Right cardiac atrium (tissue), 5 donors: ENCODE measurements at regions of chr7 and their contacts with region 1.

Region 1: DNA sequence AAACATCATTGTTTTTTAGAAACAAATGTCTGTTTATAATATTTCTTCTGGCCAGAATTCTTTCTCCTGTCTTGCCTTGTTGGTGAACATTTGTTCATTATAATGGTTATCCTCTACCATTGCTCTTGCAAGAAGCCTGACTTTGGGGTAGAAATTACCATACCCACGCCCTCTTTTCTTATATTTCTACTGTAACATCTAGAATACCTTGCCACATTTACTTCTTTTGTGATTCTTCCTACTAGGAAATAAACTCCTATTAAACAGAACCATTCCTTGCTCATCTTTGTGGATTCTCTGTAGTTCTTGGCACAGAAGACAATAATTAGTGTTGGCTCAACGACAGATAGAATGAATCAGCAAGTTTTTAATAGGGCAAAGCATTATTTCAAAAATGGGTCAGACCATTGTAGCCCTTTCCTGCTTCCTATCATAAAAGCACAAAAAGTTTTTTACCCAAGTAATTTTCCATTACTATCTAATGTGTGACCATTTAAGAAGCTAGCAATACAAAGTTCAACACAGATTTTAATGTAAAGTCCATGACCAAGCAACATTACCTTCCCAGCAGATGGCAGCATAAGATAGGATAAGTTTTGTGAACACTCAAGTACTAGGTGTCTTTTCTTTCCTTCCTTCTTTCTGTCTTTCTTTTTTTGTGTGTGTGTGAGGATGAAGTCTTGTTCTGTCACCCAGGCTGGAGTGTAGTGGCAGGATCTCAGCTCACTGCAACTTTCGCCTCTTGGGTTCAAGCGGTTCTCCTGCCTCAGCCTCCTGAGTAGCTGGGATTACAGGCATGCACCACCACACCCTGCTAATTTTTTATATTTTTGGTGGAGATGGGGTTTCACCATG is 270.4 kb downstream of the HGF start:
- DNase-seq: no peak
- ATAC-seq: peak; percentile 77 to 82
- H3K4me3 ChIP-seq: no peak overlapping the region
- H3K27ac ChIP-seq: no peak overlapping the region
- H3K4me1 ChIP-seq: peaks cover 2% of the 10 kb centered on the region
- H3K27me3 ChIP-seq: no peaks in the 10 kb centered on the region

Region 2: DNA sequence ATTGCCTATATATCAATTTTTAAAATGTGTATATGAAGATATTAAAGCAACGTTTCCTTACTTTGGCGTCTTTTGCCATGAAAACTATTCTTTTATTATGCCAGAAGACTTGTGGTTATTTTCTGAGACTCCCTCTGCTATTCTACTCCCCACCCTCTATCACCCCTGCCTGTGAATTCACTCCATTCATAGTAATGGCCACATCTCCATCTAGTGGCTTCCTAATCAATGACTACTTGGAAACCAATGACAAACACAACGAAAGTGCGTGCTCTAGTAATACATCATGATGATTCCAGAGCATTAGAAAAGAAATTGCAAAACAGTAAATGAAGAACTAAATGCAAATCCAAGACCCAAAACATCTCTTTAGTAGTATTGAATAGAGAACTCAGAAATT is 457.0 kb after region 1 on chr7:
- intact Hi-C with region 1: loop called in 3 of 4 experiments (anchors 10 kb)
- DNase-seq: no peak
- ATAC-seq: peak; percentile 63 to 84
- H3K4me3 ChIP-seq: no peak overlapping the region
- H3K27ac ChIP-seq: no peak overlapping the region
- H3K4me1 ChIP-seq: no peaks in the 10 kb centered on the region
- H3K27me3 ChIP-seq: no peaks in the 10 kb centered on the region